Endothelial cell of umbilical vein (primary cell): ENCODE measurements at regions of chr12 and their contacts with region 1.

Region 1: GRCh38 chr12:106096376-106096775 is 42.4 kb downstream of the NUAK1 start:
- DNase-seq: peak; percentile 85
- H3K4me3 ChIP-seq: no peak overlapping the region
- H3K27ac ChIP-seq: no peak overlapping the region
- H3K4me1 ChIP-seq: peaks cover 20% of the 10 kb centered on the region
- H3K27me3 ChIP-seq: no peaks in the 10 kb centered on the region
- CTCF ChIP-seq: no peak
- POLR2A ChIP-seq: no peak

Region 2: DNA sequence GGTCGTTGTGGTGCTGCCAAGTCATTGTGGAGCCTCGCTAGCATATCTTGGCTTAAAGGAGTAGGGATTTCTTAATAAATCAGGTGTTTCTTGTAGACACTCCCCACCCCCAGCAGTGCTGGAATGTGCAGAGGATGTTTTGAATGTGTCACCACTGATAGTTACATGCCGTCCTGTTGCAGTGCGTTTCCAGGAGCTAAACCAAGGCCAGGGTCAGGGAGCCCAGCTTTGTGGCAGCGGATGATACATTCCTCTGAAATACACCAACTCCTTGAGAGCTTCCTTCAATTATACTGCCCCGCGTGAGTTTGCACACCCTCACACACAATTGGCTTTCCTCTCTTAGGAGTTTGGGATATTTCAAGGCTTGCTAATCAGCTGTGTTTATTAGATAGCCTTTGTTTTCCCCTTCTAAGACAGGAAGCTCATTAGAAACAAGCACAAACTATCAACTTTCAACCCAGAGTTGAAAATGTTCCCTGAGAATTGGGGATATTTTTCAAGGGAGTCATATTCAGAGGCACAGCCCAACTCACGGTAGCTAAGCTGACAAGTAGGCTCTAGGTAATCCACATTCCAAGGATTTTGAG is 611.0 kb before region 1 on chr12:
- CTCF ChIA-PET with region 1: no interaction called
- POLR2A ChIA-PET with region 1: no interaction called
- dilution Hi-C with region 1: no loop called
- intact Hi-C with region 1: no loop called
- DNase-seq: peak; percentile 99
- H3K4me3 ChIP-seq: no peak overlapping the region
- H3K27ac ChIP-seq: peak overlapping the region; percentile 74
- H3K4me1 ChIP-seq: peaks cover 100% of the 10 kb centered on the region
- H3K27me3 ChIP-seq: no peaks in the 10 kb centered on the region
- CTCF ChIP-seq: no peak
- POLR2A ChIP-seq: peak; percentile 90

Region 3: DNA sequence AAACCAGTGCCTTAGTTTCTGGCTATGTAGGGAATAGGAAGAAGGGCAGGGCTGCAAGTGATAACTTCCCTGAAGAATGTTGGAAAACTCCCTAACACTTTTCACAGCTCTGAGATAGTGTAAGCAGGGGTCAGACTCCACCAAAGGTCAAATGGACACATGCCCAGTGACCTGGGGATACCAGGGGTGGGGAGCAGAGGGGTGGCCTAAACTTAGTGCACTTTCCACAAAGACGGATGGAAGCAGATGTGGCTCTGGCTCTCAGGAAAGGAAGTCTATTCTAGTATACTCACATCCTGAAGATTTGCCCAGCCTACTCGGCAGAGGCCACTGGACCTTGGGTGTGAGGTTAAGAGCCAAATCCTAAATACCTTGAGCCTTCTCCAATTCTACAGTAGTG is 243.4 kb before region 1 on chr12:
- CTCF ChIA-PET with region 1: no interaction called
- POLR2A ChIA-PET with region 1: interaction called, 11 read pairs
- dilution Hi-C with region 1: no loop called
- intact Hi-C with region 1: no loop called
- DNase-seq: no peak
- H3K4me3 ChIP-seq: no peak overlapping the region
- H3K27ac ChIP-seq: no peak overlapping the region
- H3K4me1 ChIP-seq: peaks cover 23% of the 10 kb centered on the region
- H3K27me3 ChIP-seq: no peaks in the 10 kb centered on the region
- CTCF ChIP-seq: no peak
- POLR2A ChIP-seq: no peak

Region 4: GRCh38 chr12:106108185-106108835 is 11.9 kb after region 1 on chr12:
- CTCF ChIA-PET with region 1: interaction called, 6 read pairs
- POLR2A ChIA-PET with region 1: no interaction called
- dilution Hi-C with region 1: no loop called
- intact Hi-C with region 1: loop called (anchors 1 kb)
- DNase-seq: no peak
- H3K4me3 ChIP-seq: no peak overlapping the region
- H3K27ac ChIP-seq: no peak overlapping the region
- H3K4me1 ChIP-seq: peaks cover 34% of the 10 kb centered on the region
- H3K27me3 ChIP-seq: no peaks in the 10 kb centered on the region
- CTCF ChIP-seq: no peak
- POLR2A ChIP-seq: no peak